ENCODE measurements at regions of chr2 and their contacts with region 1.

Region 1: GRCh38 chr2:216572582-216573578 is 60.3 kb upstream of the IGFBP2 start:
- DNase-seq: peak; percentile 94
- ATAC-seq: peak; percentile 91
- H3K4me3 ChIP-seq: no peak overlapping the region
- H3K27ac ChIP-seq: peak overlapping the region; percentile 89 to 100
- H3K4me1 ChIP-seq: peaks cover 2% of the 10 kb centered on the region in 2 donors
- H3K27me3 ChIP-seq: no peaks in the 10 kb centered on the region

Region 2: DNA sequence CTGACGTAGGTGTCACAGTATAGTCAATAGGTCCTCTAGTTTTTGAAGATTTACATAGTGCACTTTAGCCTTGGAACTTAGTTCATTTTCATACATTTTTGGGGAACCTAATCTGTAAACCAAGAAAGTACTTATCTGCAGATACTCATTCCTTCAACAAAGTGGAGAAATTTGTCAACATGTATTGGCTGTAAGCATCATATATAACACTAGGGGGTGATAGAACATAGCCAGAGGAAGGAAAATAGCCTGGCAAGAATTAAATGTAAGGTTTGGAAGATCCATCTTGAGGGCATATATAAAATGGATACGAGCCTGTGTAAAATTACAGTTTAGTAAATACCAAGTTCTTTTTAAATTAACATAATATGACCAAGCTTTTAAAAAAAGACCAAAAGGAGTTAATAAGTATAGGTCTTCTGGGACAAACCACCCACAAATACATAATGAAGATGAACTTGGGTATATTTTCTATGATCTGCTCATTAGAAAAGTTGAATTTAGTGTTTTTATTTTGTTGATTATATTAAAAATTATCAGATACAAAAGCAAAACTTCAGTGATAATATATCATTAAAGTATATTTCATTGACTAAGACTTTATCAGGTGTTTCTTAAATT is 56.0 kb before region 1 on chr2:
- intact Hi-C with region 1: loop called in 1 of 2 experiments (anchors 5 kb)
- DNase-seq: no peak
- ATAC-seq: peak; percentile 74
- H3K4me3 ChIP-seq: no peak overlapping the region
- H3K27ac ChIP-seq: no peak overlapping the region
- H3K4me1 ChIP-seq: peaks cover 0 to 4% of the 10 kb centered on the region in 2 donors
- H3K27me3 ChIP-seq: no peaks in the 10 kb centered on the region

Region 3: GRCh38 chr2:216535454-216535995 is 37.4 kb before region 1 on chr2:
- intact Hi-C with region 1: loop called (anchors 5 kb)
- DNase-seq: peak; percentile 81 to 92
- ATAC-seq: peak; percentile 87
- H3K4me3 ChIP-seq: no peak overlapping the region
- H3K27ac ChIP-seq: peak overlapping the region; percentile 84 to 98
- H3K4me1 ChIP-seq: peaks cover 0 to 10% of the 10 kb centered on the region in 2 donors
- H3K27me3 ChIP-seq: no peaks in the 10 kb centered on the region

Region 4: GRCh38 chr2:216546641-216547403 is 26.1 kb before region 1 on chr2:
- intact Hi-C with region 1: loop called in 1 of 2 experiments (anchors 2 kb)
- DNase-seq: no peak
- ATAC-seq: peak; percentile 65
- H3K4me3 ChIP-seq: no peak overlapping the region
- H3K27ac ChIP-seq: peak overlapping the region; percentile 62 to 100
- H3K4me1 ChIP-seq: peaks cover 9 to 10% of the 10 kb centered on the region in 2 donors
- H3K27me3 ChIP-seq: no peaks in the 10 kb centered on the region

Region 5: GRCh38 chr2:216619411-216620393 is 46.8 kb after region 1 on chr2:
- intact Hi-C with region 1: loop called in 1 of 2 experiments (anchors 2 kb)
- DNase-seq: no peak
- ATAC-seq: no peak
- H3K4me3 ChIP-seq: no peak overlapping the region
- H3K27ac ChIP-seq: peak overlapping the region in 1 of 2 donors; percentile 50
- H3K4me1 ChIP-seq: peaks cover 0 to 4% of the 10 kb centered on the region in 2 donors
- H3K27me3 ChIP-seq: no peaks in the 10 kb centered on the region

Region 6: DNA sequence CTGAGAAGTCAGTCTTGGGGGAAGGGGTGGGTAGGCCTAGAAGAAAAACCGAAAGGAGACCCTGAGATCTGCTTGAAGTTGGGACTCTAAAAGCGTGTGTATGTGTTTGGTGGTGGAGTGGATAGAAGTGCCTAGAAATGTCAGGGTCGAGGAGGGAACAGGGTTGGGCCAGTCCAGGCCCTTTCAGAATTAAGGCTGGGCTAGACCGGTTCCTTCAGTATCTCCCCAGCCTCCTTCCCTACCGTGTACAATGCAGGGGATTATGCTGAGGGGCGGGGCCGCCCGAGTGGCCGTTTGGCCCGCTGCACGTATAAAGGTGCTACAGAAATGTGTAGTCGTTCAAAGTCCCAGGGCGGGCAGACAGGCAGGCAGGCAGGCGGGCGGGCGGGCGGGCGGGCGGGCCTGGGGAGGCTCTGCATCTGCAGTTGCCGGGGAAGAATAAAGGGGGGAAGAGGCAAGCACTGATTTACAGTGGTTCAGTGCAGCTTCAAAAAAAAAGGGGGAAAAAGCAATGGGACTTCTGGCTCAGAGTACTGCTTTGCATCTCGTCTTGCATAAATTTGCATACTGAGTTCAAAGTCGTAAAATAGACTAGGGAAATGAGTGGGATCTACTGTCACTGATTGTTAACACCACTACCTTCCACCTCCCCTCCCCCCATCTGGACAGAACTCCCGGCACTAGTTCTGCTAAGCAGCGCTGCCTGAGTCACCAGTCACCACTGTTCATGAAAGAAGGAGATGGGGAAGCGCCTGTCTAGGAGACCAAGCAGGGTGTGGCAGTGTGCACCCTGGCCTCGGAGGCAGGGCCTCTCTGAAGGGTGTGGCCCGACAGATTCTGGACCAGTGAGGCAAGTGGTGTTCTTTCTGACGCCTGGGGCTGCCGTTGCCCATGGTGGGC is 63.9 kb after region 1 on chr2:
- intact Hi-C with region 1: loop called in 1 of 2 experiments (anchors 2 kb)
- DNase-seq: peak; percentile 73 to 83
- ATAC-seq: peak; percentile 47
- H3K4me3 ChIP-seq: peak overlapping the region; percentile 96 to 99
- H3K27ac ChIP-seq: peak overlapping the region; percentile 37 to 93
- H3K4me1 ChIP-seq: no peaks in the 10 kb centered on the region
- H3K27me3 ChIP-seq: no peaks in the 10 kb centered on the region

Region 7: DNA sequence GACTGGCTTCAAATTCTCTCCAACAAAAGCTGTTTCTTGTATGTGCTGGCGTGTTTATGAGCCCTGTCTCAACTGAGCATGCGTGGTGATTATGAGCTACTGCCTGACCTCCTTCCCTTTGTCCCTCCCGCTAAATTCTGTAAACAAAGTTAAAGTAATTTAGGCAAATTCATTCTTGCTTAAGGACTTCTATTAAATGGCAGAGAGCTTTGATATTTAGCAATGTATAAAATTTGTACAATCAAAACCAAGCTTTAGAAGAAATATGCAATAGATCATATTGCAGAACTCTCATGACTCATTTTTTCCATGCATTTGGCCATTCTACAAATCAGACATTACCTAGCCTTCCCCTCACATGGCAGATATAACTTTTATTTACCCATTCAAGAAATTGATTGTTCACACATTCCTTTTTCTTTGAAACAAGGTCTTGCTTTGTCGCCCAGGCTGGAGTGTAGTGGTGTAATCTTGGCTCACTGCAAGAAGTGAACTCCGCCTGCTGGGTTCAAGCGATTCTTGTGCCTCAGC is 78.5 kb after region 1 on chr2:
- intact Hi-C with region 1: loop called (anchors 5 kb)
- DNase-seq: no peak
- ATAC-seq: no peak
- H3K4me3 ChIP-seq: no peak overlapping the region
- H3K27ac ChIP-seq: peak overlapping the region; percentile 49 to 72
- H3K4me1 ChIP-seq: peaks cover 0 to 7% of the 10 kb centered on the region in 2 donors
- H3K27me3 ChIP-seq: no peaks in the 10 kb centered on the region

Region 8: DNA sequence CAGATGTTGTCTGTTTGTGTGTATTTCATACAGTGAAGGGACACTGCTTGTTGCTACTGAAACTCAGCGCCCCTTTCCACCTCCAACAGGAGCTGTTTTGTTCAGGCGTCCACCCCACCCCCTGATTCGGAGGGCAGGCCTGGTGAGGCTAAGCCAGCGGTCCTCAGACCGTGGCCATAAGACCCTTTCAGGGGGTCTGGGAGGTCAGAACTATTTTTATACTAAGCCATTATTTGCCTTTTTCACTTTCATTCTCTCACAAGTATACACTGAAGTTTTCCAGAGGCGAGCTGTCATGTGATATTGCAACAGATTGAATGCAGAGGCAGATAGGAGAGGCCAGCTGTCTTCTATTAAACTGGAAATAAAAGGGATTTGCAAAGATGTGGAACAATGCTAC is 162.2 kb after region 1 on chr2:
- intact Hi-C with region 1: no loop called
- DNase-seq: no peak
- ATAC-seq: peak; percentile 31
- H3K4me3 ChIP-seq: no peak overlapping the region
- H3K27ac ChIP-seq: no peak overlapping the region
- H3K4me1 ChIP-seq: no peaks in the 10 kb centered on the region
- H3K27me3 ChIP-seq: no peaks in the 10 kb centered on the region

Measured in aorta (tissue), 5 donors.